ENCODE measurements at regions of chr1 and their contacts with region 1.

Region 1: GRCh38 chr1:9724706-9725476 is 73.4 kb downstream of the PIK3CD start:
- DNase-seq: peak; percentile 80
- ATAC-seq: peak; percentile 78
- H3K4me3 Mint-ChIP-seq: no peak overlapping the region
- H3K27ac Mint-ChIP-seq: peak overlapping the region; percentile 32; the same call in 1 of the 2 replicates
- H3K4me1 Mint-ChIP-seq: peaks cover 8% of the 10 kb centered on the region
- H3K27me3 Mint-ChIP-seq: no peaks in the 10 kb centered on the region; the same call in 1 of the 2 replicates
- CTCF ChIP-seq: peak; percentile 92

Region 2: GRCh38 chr1:9466780-9467758 is 257.8 kb before region 1 on chr1:
- CTCF ChIA-PET with region 1: no interaction called
- POLR2A ChIA-PET with region 1: no interaction called
- DNase-seq: no peak
- ATAC-seq: no peak
- H3K4me3 Mint-ChIP-seq: no peak overlapping the region
- H3K27ac Mint-ChIP-seq: no peak overlapping the region
- H3K4me1 Mint-ChIP-seq: no peaks in the 10 kb centered on the region
- H3K27me3 Mint-ChIP-seq: no peaks in the 10 kb centered on the region
- CTCF ChIP-seq: no peak

Region 3: GRCh38 chr1:9621032-9621431 is 103.9 kb before region 1 on chr1:
- CTCF ChIA-PET with region 1: interaction called, 73 read pairs
- POLR2A ChIA-PET with region 1: interaction called, 4 read pairs
- DNase-seq: no peak
- ATAC-seq: no peak
- H3K4me3 Mint-ChIP-seq: no peak overlapping the region
- H3K27ac Mint-ChIP-seq: no peak overlapping the region
- H3K4me1 Mint-ChIP-seq: no peaks in the 10 kb centered on the region
- H3K27me3 Mint-ChIP-seq: peaks cover 1% of the 10 kb centered on the region
- CTCF ChIP-seq: no peak

Region 4: GRCh38 chr1:9689011-9689706 is 35.7 kb before region 1 on chr1:
- CTCF ChIA-PET with region 1: interaction called, 163 read pairs
- POLR2A ChIA-PET with region 1: interaction called, 3 read pairs
- DNase-seq: peak; percentile 92
- ATAC-seq: peak; percentile 79
- H3K4me3 Mint-ChIP-seq: peak overlapping the region; percentile 77
- H3K27ac Mint-ChIP-seq: no peak overlapping the region
- H3K4me1 Mint-ChIP-seq: peaks cover 36% of the 10 kb centered on the region
- H3K27me3 Mint-ChIP-seq: peaks cover 40% of the 10 kb centered on the region
- CTCF ChIP-seq: no peak

Region 5: DNA sequence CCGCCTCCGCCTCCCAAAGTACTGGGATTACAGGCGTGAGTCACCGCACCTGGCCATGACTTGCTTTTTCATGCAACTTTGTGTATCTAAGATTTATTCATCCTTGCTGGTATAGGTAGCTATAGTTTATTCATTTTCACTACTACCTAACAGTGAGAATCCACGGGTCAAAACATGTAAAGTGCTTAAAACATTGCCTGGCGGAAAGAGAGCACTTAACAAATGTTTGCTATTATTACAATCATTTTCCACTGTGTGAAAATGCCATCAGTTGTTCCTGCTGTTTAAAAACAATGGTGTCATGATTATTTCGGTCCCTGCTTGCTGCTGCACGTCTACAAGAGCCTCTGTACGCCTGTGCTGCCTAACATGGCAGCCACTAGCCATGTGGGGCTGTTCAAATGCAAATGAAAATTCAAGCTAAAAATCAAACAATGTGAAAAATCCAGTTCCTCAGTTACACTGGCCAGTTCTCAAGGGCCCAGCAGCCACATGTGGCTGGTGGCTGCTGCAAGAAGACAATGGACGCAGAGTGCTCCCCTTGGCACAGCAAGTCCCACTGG is 33.7 kb after region 1 on chr1:
- CTCF ChIA-PET with region 1: interaction called, 11 read pairs
- POLR2A ChIA-PET with region 1: no interaction called
- DNase-seq: no peak
- ATAC-seq: no peak
- H3K4me3 Mint-ChIP-seq: no peak overlapping the region
- H3K27ac Mint-ChIP-seq: peak overlapping the region; percentile 95
- H3K4me1 Mint-ChIP-seq: peaks cover 60% of the 10 kb centered on the region
- H3K27me3 Mint-ChIP-seq: no peaks in the 10 kb centered on the region
- CTCF ChIP-seq: no peak

Region 6: DNA sequence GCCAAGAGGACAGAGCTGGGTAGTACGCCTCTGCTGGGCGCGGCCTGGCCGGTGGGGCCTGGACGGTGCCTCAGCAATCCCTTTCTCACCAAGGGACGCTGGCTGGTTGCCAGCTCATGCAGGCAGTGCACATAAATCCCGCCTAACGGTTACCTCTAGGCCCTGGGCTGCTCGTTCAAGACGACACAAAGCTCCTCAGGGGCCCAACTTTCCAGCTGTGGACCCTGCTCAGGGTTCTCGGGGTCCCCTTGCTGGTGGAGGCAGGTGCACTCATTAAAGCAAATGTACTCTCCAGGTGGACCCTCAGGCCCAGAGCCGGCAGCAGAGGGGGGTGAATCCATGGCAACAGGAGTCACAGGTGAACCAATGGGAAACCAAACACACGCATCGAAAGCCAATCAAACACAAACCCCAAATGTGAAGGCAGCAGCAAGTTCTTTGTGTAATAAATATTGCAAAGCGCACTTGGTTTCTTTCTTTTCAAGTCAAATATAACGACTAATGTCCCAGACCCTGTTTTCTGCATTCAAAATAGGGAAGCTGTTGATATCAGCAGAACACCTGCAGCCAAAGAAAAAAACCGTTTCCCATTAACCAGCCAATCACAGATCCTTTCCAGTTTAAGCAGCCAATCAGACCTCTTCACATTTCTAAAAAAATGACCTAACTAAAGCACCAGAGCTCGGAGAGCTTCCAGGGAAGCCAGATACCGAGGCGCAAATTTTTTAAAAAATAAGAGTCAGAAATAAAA is 125.0 kb after region 1 on chr1:
- CTCF ChIA-PET with region 1: interaction called, 16 read pairs
- POLR2A ChIA-PET with region 1: interaction called, 3 read pairs
- DNase-seq: no peak
- ATAC-seq: peak; percentile 57
- H3K4me3 Mint-ChIP-seq: peak overlapping the region; percentile 68
- H3K27ac Mint-ChIP-seq: no peak overlapping the region
- H3K4me1 Mint-ChIP-seq: peaks cover 38% of the 10 kb centered on the region
- H3K27me3 Mint-ChIP-seq: no peaks in the 10 kb centered on the region
- CTCF ChIP-seq: no peak

Region 7: GRCh38 chr1:9929431-9930385 is 204.8 kb after region 1 on chr1:
- CTCF ChIA-PET with region 1: no interaction called
- POLR2A ChIA-PET with region 1: no interaction called
- DNase-seq: peak; percentile 41
- ATAC-seq: peak; percentile 93
- H3K4me3 Mint-ChIP-seq: peak overlapping the region; percentile 29; the same call in 1 of the 2 replicates
- H3K27ac Mint-ChIP-seq: peak overlapping the region; percentile 97
- H3K4me1 Mint-ChIP-seq: peaks cover 42% of the 10 kb centered on the region
- H3K27me3 Mint-ChIP-seq: no peaks in the 10 kb centered on the region
- CTCF ChIP-seq: no peak